Kidney (tissue), 22 donors: ENCODE measurements at regions of chr3 and their contacts with region 1.

Region 1: GRCh38 chr3:16600780-16601539 is 4.3 kb downstream of the DAZL start:
- DNase-seq: peak; percentile 78 to 91 (median 81)
- H3K4me3 ChIP-seq: no peak overlapping the region
- H3K27ac ChIP-seq: no peak overlapping the region
- H3K4me1 ChIP-seq: no peaks in the 10 kb centered on the region
- H3K27me3 ChIP-seq: no peaks in the 10 kb centered on the region
- CTCF ChIP-seq: peak; percentile 84

Region 2: GRCh38 chr3:17243621-17244020 is 642.7 kb after region 1 on chr3:
- intact Hi-C with region 1: loop called (anchors 10 kb)
- DNase-seq: no peak
- H3K4me3 ChIP-seq: no peak overlapping the region
- H3K27ac ChIP-seq: no peak overlapping the region
- H3K4me1 ChIP-seq: peaks cover 0 to 3% (median 0%) of the 10 kb centered on the region in 3 donors
- H3K27me3 ChIP-seq: no peaks in the 10 kb centered on the region
- CTCF ChIP-seq: no peak